ENCODE measurements at regions of chr7 and their contacts with region 1.

Region 1: DNA sequence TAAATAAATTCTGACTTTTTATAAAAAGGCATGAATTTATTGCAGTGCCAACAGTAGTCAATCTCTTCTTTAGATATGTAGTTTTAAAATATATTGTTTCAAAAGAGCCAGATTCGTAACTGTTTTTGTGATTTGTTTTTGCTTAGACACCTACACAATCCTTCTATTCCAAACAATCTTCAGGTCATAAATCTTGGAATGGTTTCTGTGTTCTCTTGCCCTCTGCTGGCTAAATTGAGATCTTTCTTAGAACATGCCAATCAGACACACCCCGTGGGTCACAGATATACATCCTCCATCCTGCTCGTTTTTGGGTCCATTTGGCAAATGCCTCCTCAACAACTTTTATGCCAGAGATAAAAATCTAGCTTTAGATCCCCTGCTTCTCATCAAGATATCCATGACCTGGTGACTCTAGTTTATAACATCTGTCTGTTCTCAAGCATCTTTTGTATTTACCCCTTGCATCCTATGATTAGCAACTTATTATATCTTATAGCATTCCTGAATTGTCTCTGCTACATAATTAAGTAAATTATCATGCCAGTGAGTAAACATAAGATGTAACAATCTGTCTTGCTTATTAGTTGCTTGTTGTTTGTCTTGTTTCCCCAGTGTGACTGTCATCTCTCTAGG is 35.3 kb upstream of the IFRD1 start:
- DNase-seq: no peak
- H3K4me3 ChIP-seq: no peak overlapping the region
- H3K27ac ChIP-seq: no peak overlapping the region
- H3K4me1 ChIP-seq: no peaks in the 10 kb centered on the region
- H3K27me3 ChIP-seq: no peaks in the 10 kb centered on the region
- CTCF ChIP-seq: peak in 5 of 6 experiments; percentile 42 to 66 (median 57)
- POLR2A ChIP-seq: no peak

Region 2: DNA sequence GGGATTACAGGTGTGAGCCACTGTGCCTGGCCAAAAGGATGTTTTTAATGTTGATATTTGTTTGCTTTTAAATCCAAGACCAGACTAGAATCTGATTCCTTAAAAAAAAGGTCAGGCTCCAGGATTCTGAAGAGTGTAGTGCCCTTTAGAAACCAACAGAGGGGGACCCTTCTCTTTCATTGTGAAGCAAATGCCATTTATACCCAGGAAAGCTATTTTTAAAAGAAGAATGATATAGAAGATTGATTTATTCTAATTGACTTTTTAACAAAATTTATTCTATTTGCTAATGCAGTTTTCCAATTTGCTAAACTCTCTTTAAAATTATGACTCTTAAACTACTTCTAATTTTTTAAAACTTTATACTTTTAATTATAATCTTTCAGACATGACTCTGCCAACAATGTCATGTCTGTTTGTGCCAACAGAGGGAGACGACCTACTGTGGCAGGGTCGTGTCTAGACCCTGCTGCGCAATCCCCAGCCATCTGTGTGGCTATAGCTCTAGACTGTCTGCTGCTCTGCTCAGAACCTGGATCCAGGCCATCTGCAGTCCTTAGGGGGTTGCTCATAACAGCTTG is 651.7 kb before region 1 on chr7:
- intact Hi-C with region 1: loop called (anchors 10 kb)
- DNase-seq: no peak
- H3K4me3 ChIP-seq: no peak overlapping the region
- H3K27ac ChIP-seq: no peak overlapping the region
- H3K4me1 ChIP-seq: no peaks in the 10 kb centered on the region
- H3K27me3 ChIP-seq: no peaks in the 10 kb centered on the region
- CTCF ChIP-seq: peak in 4 of 6 experiments; percentile 8 to 60 (median 57)
- POLR2A ChIP-seq: no peak

Measured in thyroid gland (tissue), 4 donors.